Psoas muscle (tissue), 8 donors: ENCODE measurements at regions of chr17 and their contacts with region 1.

Region 1: GRCh38 chr17:76467366-76467765 is at the start of gene AANAT:
- DNase-seq: no peak
- ATAC-seq: no peak
- H3K4me3 ChIP-seq: no peak within 1 kb of the TSS
- H3K27ac ChIP-seq: no peak within 1 kb of the TSS
- H3K4me1 ChIP-seq: no peaks in the 10 kb centered on the region
- H3K27me3 ChIP-seq: no peaks in the 10 kb centered on the region
- CTCF ChIP-seq: no peak
- total RNA-seq, gene AANAT: not detected

Region 2: GRCh38 chr17:75808905-75809715 is 658.3 kb before region 1 on chr17:
- intact Hi-C with region 1: no loop called
- DNase-seq: peak; percentile 69 to 70
- ATAC-seq: peak; percentile 85 to 96 (median 90)
- H3K4me3 ChIP-seq: peak overlapping the region; percentile 25
- H3K27ac ChIP-seq: peak overlapping the region; percentile 78
- H3K4me1 ChIP-seq: peaks cover 24% of the 10 kb centered on the region
- H3K27me3 ChIP-seq: no peaks in the 10 kb centered on the region
- CTCF ChIP-seq: no peak

Region 3: GRCh38 chr17:75959051-75959838 is 508.1 kb before region 1 on chr17:
- intact Hi-C with region 1: no loop called
- DNase-seq: no peak
- ATAC-seq: no peak
- H3K4me3 ChIP-seq: no peak overlapping the region
- H3K27ac ChIP-seq: no peak overlapping the region
- H3K4me1 ChIP-seq: no peaks in the 10 kb centered on the region
- H3K27me3 ChIP-seq: no peaks in the 10 kb centered on the region
- CTCF ChIP-seq: no peak

Region 4: DNA sequence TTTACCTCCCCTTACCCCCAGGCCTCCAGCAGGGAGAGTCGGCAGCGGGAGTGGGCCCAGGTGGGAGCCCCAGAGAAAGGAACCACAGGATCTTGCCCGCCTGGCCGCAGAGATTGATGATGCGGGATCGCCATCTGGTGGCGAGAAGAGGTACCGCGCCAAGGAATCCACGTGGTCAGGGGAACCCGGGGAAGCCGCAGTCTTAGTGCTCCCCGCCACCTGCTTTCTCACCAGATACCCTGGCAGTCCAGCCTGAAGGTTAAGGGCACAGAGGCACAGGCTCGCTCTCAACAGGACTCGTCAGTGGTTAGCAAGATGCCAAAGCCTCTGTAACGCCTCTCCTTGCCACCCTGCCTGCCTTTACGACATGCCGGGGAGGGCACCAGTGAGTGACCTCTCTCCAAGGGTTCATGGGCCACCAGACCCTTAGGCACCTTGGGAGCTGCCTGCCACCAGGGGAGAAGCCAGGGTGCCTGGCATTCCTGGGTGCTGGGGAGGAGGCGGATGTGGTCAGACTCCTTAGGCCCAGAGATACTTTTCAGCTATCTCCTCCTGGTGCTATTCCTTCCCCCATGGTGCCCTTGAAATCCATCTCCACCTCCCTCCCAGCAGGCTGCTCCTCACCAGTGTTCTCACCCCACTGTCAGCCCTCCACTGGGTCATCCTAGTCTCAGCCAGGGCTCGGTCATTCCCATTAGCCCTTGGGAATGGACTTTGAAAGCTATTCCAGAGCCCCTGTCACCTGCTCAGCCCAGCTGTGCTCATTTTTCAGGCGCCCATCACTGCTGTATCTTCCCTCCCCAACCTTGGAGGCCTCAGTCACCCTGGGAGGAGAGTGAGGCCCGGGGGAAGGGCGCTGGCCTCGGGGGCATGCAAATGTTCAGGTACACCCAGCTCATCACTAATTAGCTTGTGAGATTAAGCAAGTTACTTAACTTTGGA is 39.3 kb after region 1 on chr17:
- intact Hi-C with region 1: loop called (anchors 1 to 2 kb)
- DNase-seq: peak; percentile 85 to 92
- ATAC-seq: peak; percentile 82 to 89 (median 85)
- H3K4me3 ChIP-seq: no peak overlapping the region
- H3K27ac ChIP-seq: peak overlapping the region; percentile 32
- H3K4me1 ChIP-seq: peaks cover 4% of the 10 kb centered on the region
- H3K27me3 ChIP-seq: no peaks in the 10 kb centered on the region
- CTCF ChIP-seq: peak; percentile 96

Region 5: GRCh38 chr17:76547184-76547641 is 79.8 kb after region 1 on chr17:
- intact Hi-C with region 1: no loop called
- DNase-seq: peak in 1 of 2 donors; percentile 40
- ATAC-seq: peak; percentile 74 to 80 (median 78)
- H3K4me3 ChIP-seq: no peak overlapping the region
- H3K27ac ChIP-seq: no peak overlapping the region
- H3K4me1 ChIP-seq: peaks cover 49% of the 10 kb centered on the region
- H3K27me3 ChIP-seq: no peaks in the 10 kb centered on the region
- CTCF ChIP-seq: peak; percentile 66